ENCODE measurements at regions of chr3 and their contacts with region 1.

Region 1: DNA sequence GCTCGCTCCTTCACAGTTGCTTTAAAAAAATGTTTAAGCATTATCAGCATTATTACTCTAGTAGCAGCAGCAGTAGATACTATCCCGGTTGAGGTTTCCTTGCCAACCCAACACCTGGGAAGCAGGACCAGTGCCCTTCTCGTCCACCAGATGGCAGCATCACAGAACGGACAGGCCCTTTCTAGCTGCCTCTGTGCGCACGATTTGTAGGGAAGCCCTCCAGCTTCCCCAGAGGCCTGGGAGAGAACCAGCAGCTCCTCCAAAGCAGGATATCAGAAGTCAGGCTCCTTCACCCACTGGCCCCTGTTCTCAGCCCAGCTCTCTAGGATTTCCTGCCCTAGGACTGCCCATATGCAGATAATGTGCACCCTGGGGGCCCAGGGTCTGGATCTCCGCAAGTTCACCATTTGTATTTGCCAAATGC is 16.8 kb upstream of the ESYT3 start:
- DNase-seq: peak; percentile 72 to 85 (median 76)
- ATAC-seq: peak; percentile 65 to 86 (median 85)
- H3K4me3 ChIP-seq: no peak overlapping the region
- H3K27ac ChIP-seq: no peak overlapping the region
- H3K4me1 ChIP-seq: peaks cover 0 to 18% (median 5%) of the 10 kb centered on the region in 12 donors
- H3K27me3 ChIP-seq: no peaks in the 10 kb centered on the region
- CTCF ChIP-seq: peak; percentile 82 to 99 (median 89)
- POLR2A ChIP-seq: no peak

Region 2: GRCh38 chr3:138329127-138329983 is 88.2 kb before region 1 on chr3 and contains the start of gene NME9:
- intact Hi-C with region 1: loop called in 7 of 10 experiments (anchors 5 kb)
- DNase-seq: peak; percentile 89 to 94 (median 92)
- ATAC-seq: peak; percentile 94 to 98 (median 96)
- H3K4me3 ChIP-seq: peak within 1 kb of the TSS; percentile 47 to 72 (median 66)
- H3K27ac ChIP-seq: peak within 1 kb of the TSS in 9 of 12 donors; percentile 16 to 69 (median 53)
- H3K4me1 ChIP-seq: peaks cover 0 to 18% (median 9%) of the 10 kb centered on the region in 12 donors
- H3K27me3 ChIP-seq: no peaks in the 10 kb centered on the region
- CTCF ChIP-seq: peak; percentile 17 to 62 (median 42)
- POLR2A ChIP-seq: no peak
- total RNA-seq, gene NME9: not detected

Region 3: DNA sequence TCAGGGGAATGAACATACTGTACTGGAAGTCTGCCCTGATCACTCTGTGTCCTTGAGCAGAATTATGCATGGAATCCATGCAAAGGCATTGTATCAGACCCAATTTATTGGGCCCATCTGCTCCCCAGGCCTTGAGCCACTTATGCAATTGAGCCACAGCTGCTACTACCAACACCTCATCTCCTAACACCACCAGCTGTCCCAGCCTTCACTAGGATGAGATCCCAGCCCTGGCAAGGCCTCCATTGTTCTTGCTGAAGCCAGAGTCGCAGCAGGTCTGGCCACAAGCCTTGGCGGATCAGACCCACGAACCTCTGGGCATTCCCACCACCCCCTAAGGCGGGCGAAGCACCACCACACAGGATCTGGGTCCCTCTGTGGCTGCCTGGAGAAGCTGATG is 78.8 kb before region 1 on chr3:
- intact Hi-C with region 1: loop called in 9 of 10 experiments (anchors 5 kb)
- DNase-seq: no peak
- ATAC-seq: peak; percentile 31 to 39 (median 36)
- H3K4me3 ChIP-seq: no peak overlapping the region
- H3K27ac ChIP-seq: no peak overlapping the region
- H3K4me1 ChIP-seq: peaks cover 0 to 12% (median 0%) of the 10 kb centered on the region in 12 donors
- H3K27me3 ChIP-seq: no peaks in the 10 kb centered on the region
- CTCF ChIP-seq: no peak
- POLR2A ChIP-seq: no peak

Region 4: GRCh38 chr3:138923531-138923994 is 506.0 kb after region 1 on chr3:
- intact Hi-C with region 1: loop called in 5 of 10 experiments (anchors 2 to 10 kb)
- DNase-seq: peak; percentile 74 to 85 (median 74)
- ATAC-seq: peak in 3 of 4 donors; percentile 84 to 88 (median 87)
- H3K4me3 ChIP-seq: no peak overlapping the region
- H3K27ac ChIP-seq: no peak overlapping the region
- H3K4me1 ChIP-seq: peaks cover 0 to 3% (median 0%) of the 10 kb centered on the region in 12 donors
- H3K27me3 ChIP-seq: no peaks in the 10 kb centered on the region
- CTCF ChIP-seq: peak; percentile 83 to 93 (median 88)
- POLR2A ChIP-seq: no peak

Region 5: DNA sequence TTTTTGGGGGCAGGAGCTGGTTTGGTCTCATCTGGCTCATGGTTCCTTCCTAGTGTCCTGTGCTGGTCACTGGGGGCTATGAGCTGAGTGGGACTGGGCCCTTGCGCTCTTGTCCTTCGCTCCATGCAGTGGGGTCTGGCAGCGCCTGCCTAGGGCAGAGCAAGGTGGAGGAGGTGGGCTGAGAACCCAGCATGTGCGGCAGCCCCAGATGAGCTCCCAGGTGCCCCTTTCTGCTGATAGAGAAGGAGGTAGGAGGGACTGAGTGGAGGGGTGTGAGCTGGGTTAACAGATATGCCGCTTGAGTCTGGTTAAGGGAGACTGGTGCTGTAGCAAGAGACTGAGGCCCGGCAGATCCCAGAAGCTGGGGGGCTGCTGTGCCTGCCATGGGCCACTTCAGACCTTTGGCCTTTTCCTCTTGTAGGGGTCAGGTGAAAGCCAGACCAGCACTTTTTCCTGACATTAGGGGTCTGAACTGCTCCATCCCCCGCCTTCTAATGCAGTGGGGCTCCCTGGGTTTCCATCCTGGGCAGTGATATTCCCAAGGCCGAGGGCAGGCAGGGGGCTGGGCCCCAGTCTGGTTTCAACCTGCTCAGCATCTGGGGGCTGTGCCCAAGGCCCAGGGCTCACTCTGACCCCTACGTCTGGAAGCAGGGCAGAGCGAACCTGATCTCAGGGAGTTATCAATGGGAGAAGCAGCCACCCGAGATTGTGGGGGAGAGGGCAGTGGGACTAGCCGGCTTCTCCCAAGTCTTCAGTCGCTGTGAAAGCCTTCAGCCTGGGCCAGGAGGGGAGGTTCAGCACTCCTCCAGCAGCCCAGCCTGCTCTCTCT is 690.1 kb after region 1 on chr3:
- intact Hi-C with region 1: no loop called
- DNase-seq: no peak
- ATAC-seq: no peak
- H3K4me3 ChIP-seq: no peak overlapping the region
- H3K27ac ChIP-seq: no peak overlapping the region
- H3K4me1 ChIP-seq: no peaks in the 10 kb centered on the region
- H3K27me3 ChIP-seq: peaks cover 0 to 16% (median 0%) of the 10 kb centered on the region in 9 donors
- CTCF ChIP-seq: no peak
- POLR2A ChIP-seq: no peak

Measured in heart left ventricle (tissue), 16 donors.